ENCODE measurements at regions of chr12 and their contacts with region 1.

Region 1: GRCh38 chr12:47819896-47820630 is at the start of gene HDAC7:
- DNase-seq: peak; percentile 95
- total RNA-seq, gene HDAC7: 62.7 TPM

Region 2: DNA sequence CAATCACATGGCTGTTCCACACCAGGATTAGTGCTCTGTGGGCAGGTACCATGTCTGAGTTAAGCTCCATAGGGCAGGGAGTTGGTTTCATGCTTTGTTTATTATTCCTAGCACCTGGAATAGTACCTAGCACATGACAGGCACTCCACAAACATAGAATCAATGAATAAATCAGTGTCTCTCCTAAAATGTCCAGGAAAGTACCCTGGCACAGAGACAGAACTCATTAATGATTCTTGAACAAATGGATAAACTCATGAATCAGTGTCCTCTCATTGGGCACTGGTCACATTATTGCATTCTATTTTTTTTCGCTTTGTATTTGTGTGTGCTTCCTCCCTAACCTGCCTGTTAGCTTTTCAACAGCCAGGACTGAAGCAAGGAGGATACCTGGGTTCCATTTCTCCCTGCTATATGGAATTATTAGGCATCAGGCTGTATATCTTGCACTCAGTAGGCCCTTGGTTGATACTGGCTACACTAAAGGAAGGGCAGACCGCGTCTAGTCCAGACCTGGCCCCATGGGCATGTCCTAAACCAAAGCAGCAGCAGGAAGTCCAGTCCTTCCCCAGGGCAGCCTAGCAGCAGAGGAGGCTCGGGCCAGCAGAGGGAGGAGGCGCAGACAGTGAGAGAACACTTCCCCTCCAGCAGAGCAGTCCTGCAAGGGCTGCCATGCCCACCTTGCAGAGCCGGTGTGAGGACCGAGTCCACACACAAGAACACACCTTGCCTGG is 18.7 kb before region 1 on chr12:
- intact Hi-C with region 1: loop called (anchors 2 kb)
- DNase-seq: no peak